Right cardiac atrium (tissue), 5 donors: ENCODE measurements at regions of chr7 and their contacts with region 1.

Region 1: GRCh38 chr7:155190688-155191087 is 107.0 kb upstream of the INSIG1 start:
- DNase-seq: peak in 2 of 3 donors; percentile 78 to 82
- ATAC-seq: peak; percentile 59 to 68
- H3K4me3 ChIP-seq: no peak overlapping the region
- H3K27ac ChIP-seq: no peak overlapping the region
- H3K4me1 ChIP-seq: no peaks in the 10 kb centered on the region
- H3K27me3 ChIP-seq: no peaks in the 10 kb centered on the region

Region 2: DNA sequence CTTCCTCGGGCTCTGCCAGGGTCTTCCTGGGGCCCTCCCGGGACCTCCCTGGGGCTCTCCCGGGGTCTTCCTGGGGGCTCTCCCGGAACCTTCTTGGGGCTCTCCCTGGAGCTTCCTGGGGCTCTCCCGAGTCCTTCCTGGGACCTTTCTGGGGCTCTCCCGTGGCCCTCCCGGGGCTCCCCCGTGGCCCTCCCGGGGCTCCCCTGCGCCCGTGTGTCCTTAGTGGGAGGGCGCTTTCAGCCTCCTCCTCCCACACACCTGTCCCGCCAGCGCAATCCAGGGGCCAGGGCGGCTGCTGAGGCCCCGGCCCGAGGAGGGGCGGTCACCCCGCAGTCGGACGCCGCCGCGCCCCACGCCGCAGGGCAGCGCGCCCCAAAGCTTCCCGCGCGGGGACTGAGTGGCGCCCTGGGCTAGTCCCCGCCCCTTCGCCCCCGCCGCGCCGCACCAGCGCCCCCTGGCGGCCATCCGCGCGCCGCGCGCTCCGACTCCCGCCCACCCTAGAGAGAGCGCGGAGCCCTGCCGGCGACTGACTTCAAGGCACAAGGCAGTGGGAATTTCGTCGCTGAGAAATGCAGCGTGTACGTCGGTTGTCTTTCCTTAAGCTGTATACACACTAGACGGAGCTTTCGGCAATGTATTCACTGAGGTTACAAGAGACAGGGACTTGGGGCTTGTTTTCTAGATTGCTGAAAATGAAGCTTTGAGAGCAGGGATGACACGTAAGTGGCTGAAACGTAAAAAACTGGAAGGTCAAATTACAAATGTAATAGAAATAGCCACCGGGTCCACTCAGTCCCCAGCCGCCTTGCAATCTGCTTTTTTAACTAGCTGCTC is 154.1 kb after region 1 on chr7:
- intact Hi-C with region 1: loop called (anchors 2 to 5 kb)
- DNase-seq: peak; percentile 78 to 93 (median 91)
- ATAC-seq: peak; percentile 96 to 98
- H3K4me3 ChIP-seq: peak overlapping the region; percentile 12
- H3K27ac ChIP-seq: no peak overlapping the region
- H3K4me1 ChIP-seq: no peaks in the 10 kb centered on the region
- H3K27me3 ChIP-seq: no peaks in the 10 kb centered on the region

Region 3: DNA sequence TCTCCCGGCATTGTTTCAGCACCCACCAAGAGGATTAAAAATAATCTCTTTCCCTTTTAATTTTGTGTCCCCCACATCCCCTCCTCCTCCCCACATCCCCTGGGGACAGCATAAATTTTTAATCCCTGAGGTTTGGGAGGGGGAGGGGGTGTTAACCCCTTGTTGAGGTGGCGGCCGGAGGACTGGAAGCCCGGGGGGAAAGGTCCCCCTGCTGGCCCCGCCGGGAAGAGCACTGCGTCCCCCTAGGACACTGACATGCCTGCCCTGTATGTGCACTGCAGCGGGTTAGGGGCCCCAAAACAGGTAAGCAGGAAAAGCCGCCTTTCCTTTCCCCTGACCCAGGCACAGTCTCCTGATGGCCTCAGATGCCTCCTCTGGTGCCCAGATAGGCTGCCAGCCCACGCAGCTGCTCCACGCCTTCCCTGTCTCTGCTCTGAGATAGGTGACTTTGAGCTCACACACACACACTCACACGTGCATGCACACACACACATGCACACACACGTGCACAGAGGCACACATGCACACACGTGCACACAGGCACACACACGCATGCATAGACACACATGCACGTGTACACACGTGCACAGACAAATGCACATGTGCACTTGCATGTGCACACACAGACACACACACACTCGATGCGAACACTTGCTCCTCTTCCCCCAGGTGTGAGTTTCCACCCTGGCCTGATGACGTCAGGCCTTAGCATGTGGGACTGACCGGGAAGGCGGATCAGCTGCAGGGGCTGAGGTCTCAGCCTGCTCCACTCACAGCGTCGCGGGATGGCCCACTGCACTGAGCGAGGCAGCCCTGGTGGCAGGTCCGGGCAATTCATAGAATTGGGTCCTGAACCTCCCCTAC is 343.4 kb after region 1 on chr7:
- intact Hi-C with region 1: no loop called
- DNase-seq: no peak
- ATAC-seq: peak in 1 of 2 donors; percentile 58
- H3K4me3 ChIP-seq: peak overlapping the region; percentile 37
- H3K27ac ChIP-seq: no peak overlapping the region
- H3K4me1 ChIP-seq: no peaks in the 10 kb centered on the region
- H3K27me3 ChIP-seq: no peaks in the 10 kb centered on the region

Region 4: GRCh38 chr7:155694851-155695250 is 504.2 kb after region 1 on chr7:
- intact Hi-C with region 1: no loop called
- DNase-seq: no peak
- ATAC-seq: no peak
- H3K4me3 ChIP-seq: no peak overlapping the region
- H3K27ac ChIP-seq: no peak overlapping the region
- H3K4me1 ChIP-seq: peaks cover 6% of the 10 kb centered on the region
- H3K27me3 ChIP-seq: no peaks in the 10 kb centered on the region